SK-N-SH (cell line): ENCODE measurements at regions of chr7 and their contacts with region 1.

Region 1: DNA sequence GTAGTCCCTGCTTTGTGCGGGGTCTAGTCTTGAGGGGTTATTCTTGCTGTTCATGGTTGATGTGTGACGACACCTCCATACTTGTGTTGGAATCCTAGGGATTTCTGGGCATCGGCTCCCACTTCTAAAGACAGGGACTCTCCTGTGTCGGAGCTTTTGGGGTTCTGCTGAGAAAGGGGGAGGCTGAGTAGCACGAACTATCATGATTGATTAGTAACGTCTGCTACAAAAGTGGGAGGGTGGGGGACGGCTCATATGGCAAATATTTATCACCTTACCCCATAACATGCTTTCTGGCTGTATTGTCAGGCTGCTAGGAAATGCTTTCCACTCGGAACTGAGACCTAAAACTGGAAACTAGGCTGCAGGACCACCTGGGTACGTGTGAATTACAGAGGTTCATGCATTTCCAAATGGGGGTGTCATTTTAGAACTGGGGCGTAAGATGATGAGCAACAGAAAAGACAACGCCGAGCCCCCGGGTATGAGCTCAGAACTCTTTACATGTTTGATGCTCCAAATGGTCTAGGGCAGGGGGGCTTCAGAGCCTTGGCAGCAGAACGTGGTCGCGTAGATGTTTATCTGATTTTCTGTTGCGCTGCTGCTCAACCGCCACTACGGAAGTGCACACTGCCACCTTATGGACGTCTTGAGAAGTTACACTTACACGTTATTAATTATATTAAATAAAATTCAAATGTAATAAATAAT is 15.1 kb upstream of the NME8 start:
- DNase-seq: peak; percentile 60
- H3K4me3 ChIP-seq: peak overlapping the region; percentile 5 to 21; a peak in 1 of 4 replicates
- H3K27ac ChIP-seq: no peak overlapping the region
- H3K4me1 ChIP-seq: peaks cover 0 to 9% of the 10 kb centered on the region in 2 experiments; a peak in 1 of 4 replicates
- H3K27me3 ChIP-seq: no peaks in the 10 kb centered on the region
- CTCF ChIP-seq: peak; percentile 66
- EP300 ChIP-seq: no peak
- RAD21 ChIP-seq: peak; percentile 80

Region 2: DNA sequence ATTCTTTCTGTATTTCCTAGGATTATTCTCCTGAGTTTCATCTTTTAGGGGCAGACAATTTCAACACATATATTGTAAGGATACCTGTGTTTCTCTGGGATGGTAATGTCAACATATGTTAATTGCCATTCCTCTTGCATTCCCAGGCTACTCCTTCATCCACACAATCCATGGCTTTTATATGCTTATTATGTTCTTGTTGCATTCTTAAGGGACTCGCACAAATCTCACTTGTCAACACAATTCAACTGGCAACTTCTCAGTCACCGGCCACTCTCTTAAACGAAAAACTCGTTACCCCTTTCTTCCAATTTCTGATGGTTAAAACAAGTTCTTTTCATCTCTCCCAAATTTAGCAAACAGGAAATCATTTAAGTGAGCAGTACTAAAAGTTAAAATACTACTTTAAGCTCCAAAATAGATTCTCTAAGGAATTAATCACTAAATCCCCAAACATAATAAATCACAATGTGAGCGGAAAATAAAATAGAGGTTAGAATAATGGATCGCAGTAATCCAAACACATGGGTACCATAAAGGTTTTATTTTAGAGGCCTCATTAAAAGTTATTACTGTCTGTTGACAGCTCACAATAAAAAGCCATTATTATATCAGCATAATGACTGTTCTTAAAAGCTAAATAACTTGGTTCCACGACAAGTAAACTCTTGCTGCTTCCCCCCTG is 607.8 kb before region 1 on chr7:
- CTCF ChIA-PET with region 1: interaction called, 13 read pairs
- POLR2A ChIA-PET with region 1: no interaction called
- DNase-seq: no peak
- H3K4me3 ChIP-seq: no peak overlapping the region
- H3K27ac ChIP-seq: no peak overlapping the region
- H3K4me1 ChIP-seq: peaks cover 0 to 2% of the 10 kb centered on the region in 2 experiments; a peak in 2 of 4 replicates
- H3K27me3 ChIP-seq: no peaks in the 10 kb centered on the region
- CTCF ChIP-seq: no peak
- EP300 ChIP-seq: no peak
- RAD21 ChIP-seq: no peak

Region 3: GRCh38 chr7:37510043-37510634 is 323.1 kb before region 1 on chr7:
- CTCF ChIA-PET with region 1: interaction called, 28 read pairs
- POLR2A ChIA-PET with region 1: no interaction called
- DNase-seq: peak; percentile 40
- H3K4me3 ChIP-seq: no peak overlapping the region
- H3K27ac ChIP-seq: no peak overlapping the region
- H3K4me1 ChIP-seq: no peaks in the 10 kb centered on the region; a peak in 1 of 4 replicates
- H3K27me3 ChIP-seq: no peaks in the 10 kb centered on the region
- CTCF ChIP-seq: peak; percentile 34
- EP300 ChIP-seq: no peak
- RAD21 ChIP-seq: peak; percentile 80

Region 4: DNA sequence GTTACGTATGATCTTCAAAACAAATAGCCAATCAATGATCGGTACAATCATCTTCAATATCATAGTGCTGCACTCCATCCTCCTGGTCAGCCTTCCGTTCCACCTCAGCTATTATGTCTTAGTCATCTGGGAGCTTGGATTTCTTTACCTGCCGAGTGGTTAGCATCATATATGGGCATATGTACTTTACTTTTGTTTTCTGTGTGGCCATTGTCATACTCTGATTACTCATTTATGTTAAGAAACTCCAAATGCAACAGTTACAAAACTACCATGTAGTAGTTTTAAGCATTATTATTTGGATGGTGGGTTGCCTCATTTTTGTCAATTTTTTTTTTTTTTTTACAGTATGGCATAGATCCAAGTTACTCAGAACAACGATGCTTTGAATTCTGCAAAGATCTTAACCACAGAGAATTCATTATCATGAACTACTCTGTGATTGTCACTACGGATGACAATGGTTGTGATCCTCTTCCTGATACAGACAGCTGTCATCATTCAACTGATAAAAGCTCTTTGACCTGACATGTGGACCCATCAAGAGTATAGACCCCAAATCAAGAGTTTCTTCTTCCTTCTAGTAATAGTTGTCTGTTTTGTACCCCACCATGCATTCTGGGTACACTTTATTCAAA is 37.0 kb before region 1 on chr7:
- CTCF ChIA-PET with region 1: interaction called, 11 read pairs
- POLR2A ChIA-PET with region 1: no interaction called
- DNase-seq: no peak
- H3K4me3 ChIP-seq: no peak overlapping the region
- H3K27ac ChIP-seq: no peak overlapping the region
- H3K4me1 ChIP-seq: no peaks in the 10 kb centered on the region
- H3K27me3 ChIP-seq: no peaks in the 10 kb centered on the region
- CTCF ChIP-seq: no peak
- EP300 ChIP-seq: no peak
- RAD21 ChIP-seq: no peak

Region 5: DNA sequence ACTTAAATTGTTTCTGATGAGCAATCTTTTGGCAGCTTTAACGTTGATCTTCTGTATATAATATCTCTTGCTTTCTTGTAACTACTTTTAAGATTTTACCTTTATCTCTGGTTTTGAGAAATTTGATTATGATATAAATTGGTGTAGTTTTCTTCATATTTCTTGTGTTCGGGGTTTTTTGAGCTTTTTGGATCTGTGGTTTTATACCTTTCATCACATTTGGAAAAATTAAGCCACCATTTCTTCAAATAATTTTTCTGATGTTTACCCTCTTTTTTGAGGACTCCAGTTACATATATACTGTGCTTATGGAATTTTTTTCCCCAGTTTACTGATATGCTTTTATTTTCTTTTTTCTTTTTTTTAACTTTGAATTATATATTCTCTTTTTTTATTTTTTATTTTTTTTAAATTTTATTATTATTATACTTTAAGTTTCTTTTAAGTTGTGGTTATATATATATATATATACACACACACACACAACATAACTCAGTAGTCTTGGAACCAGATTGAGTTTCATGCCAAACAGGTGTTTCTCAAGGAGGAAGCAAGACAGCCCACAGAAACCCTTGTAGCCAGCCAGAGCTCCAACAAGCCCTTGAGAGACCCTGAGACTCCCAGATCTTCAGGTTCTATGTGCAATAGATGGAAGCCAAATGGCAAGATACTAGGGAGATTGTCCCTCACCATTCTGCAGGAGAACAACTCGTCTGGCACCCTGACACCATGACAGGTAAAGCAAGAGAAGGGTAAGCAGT is 12.4 kb before region 1 on chr7:
- CTCF ChIA-PET with region 1: interaction called, 18 read pairs
- POLR2A ChIA-PET with region 1: no interaction called
- DNase-seq: no peak
- H3K4me3 ChIP-seq: no peak overlapping the region
- H3K27ac ChIP-seq: no peak overlapping the region
- H3K4me1 ChIP-seq: no peaks in the 10 kb centered on the region
- H3K27me3 ChIP-seq: no peaks in the 10 kb centered on the region
- CTCF ChIP-seq: no peak
- EP300 ChIP-seq: no peak
- RAD21 ChIP-seq: no peak

Region 6: DNA sequence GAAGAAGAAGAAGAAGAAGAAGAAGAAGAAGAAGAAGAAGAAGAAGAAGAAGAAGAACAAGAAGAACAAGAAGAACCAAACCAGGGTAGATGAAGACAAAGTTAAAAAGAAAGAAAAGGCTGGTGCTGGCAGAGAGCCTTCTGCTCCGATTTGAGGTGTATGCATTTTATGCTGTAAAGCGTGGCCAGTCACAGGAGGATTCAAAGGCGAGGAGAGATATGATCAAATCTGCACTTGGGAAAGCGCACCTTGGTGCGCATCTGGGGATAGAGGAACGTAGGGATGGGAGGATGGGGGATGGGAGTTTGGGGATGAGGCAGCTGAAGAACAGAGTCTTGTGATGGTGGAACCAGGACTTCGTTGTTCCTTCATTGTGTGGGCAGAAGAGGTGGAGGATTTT is 15.0 kb after region 1 on chr7 and contains the start of gene NME8:
- CTCF ChIA-PET with region 1: interaction called, 20 read pairs
- POLR2A ChIA-PET with region 1: no interaction called
- DNase-seq: no peak
- H3K4me3 ChIP-seq: no peak within 1 kb of the TSS
- H3K27ac ChIP-seq: no peak within 1 kb of the TSS
- H3K4me1 ChIP-seq: no peaks in the 10 kb centered on the region
- H3K27me3 ChIP-seq: no peaks in the 10 kb centered on the region
- CTCF ChIP-seq: no peak
- EP300 ChIP-seq: no peak
- RAD21 ChIP-seq: no peak
- polyA plus RNA-seq, gene NME8: not detected in 2 replicates

Region 7: GRCh38 chr7:37853474-37853873 is 20.2 kb after region 1 on chr7:
- CTCF ChIA-PET with region 1: interaction called, 20 read pairs
- POLR2A ChIA-PET with region 1: no interaction called
- DNase-seq: peak; percentile 32
- H3K4me3 ChIP-seq: no peak overlapping the region; a peak in 1 of 4 replicates
- H3K27ac ChIP-seq: no peak overlapping the region
- H3K4me1 ChIP-seq: no peaks in the 10 kb centered on the region
- H3K27me3 ChIP-seq: no peaks in the 10 kb centered on the region
- CTCF ChIP-seq: peak; percentile 51
- EP300 ChIP-seq: no peak
- RAD21 ChIP-seq: peak; percentile 64